B cell (primary cell): ENCODE measurements at regions of chr21 and their contacts with region 1.

Region 1: GRCh38 chr21:33588485-33589335 is at the start of gene DONSON:
- DNase-seq: peak; percentile 92
- ATAC-seq: peak; percentile 95
- H3K4me3 ChIP-seq: peak within 1 kb of the TSS; percentile 63 to 96 (median 95)
- H3K4me3 Mint-ChIP-seq: peak within 1 kb of the TSS; percentile 94
- H3K27ac ChIP-seq: peak within 1 kb of the TSS; percentile 24 to 50
- H3K27ac Mint-ChIP-seq: peak within 1 kb of the TSS; percentile 77
- H3K4me1 ChIP-seq: peaks cover 9 to 13% of the 10 kb centered on the region in 2 donors
- H3K4me1 Mint-ChIP-seq: peaks cover 14% of the 10 kb centered on the region
- H3K27me3 ChIP-seq: no peaks in the 10 kb centered on the region
- H3K27me3 Mint-ChIP-seq: no peaks in the 10 kb centered on the region
- CTCF ChIP-seq: peak; percentile 50
- total RNA-seq, gene DONSON: 6.0 and 6.3 TPM in 2 replicates

Region 2: GRCh38 chr21:33441489-33442477 is 146.9 kb before region 1 on chr21:
- CTCF ChIA-PET with region 1: no interaction called
- POLR2A ChIA-PET with region 1: no interaction called
- intact Hi-C with region 1: no loop called
- DNase-seq: peak; percentile 77
- ATAC-seq: peak; percentile 93
- H3K4me3 ChIP-seq: peak overlapping the region in 1 of 5 experiments; percentile 38
- H3K4me3 Mint-ChIP-seq: peak overlapping the region; percentile 71
- H3K27ac ChIP-seq: peak overlapping the region; percentile 88
- H3K27ac Mint-ChIP-seq: peak overlapping the region; percentile 96
- H3K4me1 ChIP-seq: peaks cover 56 to 65% of the 10 kb centered on the region in 2 donors
- H3K4me1 Mint-ChIP-seq: peaks cover 55% of the 10 kb centered on the region
- H3K27me3 ChIP-seq: no peaks in the 10 kb centered on the region
- H3K27me3 Mint-ChIP-seq: no peaks in the 10 kb centered on the region
- CTCF ChIP-seq: no peak

Region 3: GRCh38 chr21:33491373-33492102 is 97.2 kb before region 1 on chr21 and contains the start of gene DNAJC28:
- CTCF ChIA-PET with region 1: no interaction called
- POLR2A ChIA-PET with region 1: no interaction called
- intact Hi-C with region 1: loop called (anchors 1 kb)
- DNase-seq: peak; percentile 98
- ATAC-seq: peak; percentile 97
- H3K4me3 ChIP-seq: peak within 1 kb of the TSS; percentile 65 to 87 (median 80)
- H3K4me3 Mint-ChIP-seq: peak within 1 kb of the TSS; percentile 87
- H3K27ac ChIP-seq: peak within 1 kb of the TSS; percentile 29 to 62
- H3K27ac Mint-ChIP-seq: peak within 1 kb of the TSS; percentile 87
- H3K4me1 ChIP-seq: peaks cover 0 to 9% of the 10 kb centered on the region in 2 donors
- H3K4me1 Mint-ChIP-seq: peaks cover 10% of the 10 kb centered on the region
- H3K27me3 ChIP-seq: no peaks in the 10 kb centered on the region
- H3K27me3 Mint-ChIP-seq: no peaks in the 10 kb centered on the region
- CTCF ChIP-seq: no peak
- total RNA-seq, gene DNAJC28: 2.4 and 2.5 TPM in 2 replicates

Region 4: DNA sequence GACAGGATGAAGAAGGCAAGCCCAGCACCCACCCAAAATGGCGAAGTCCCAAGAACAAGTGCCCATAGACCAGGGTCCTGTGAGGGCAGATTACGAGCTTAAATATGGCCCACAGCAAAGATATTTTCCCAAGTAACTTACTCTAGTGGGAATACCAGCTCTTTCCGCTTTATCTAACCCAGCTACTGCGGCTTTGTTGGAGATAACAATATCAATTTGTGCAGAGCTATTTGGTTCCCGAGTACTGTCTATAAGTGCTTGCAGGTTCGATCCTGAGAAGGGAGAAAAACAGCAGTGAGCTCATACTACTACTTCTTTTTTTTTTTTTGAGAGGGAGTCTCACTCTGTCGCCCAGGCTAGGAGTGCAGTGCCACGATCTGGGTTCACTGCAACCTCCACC is 82.9 kb before region 1 on chr21:
- CTCF ChIA-PET with region 1: no interaction called
- POLR2A ChIA-PET with region 1: interaction called, 10 read pairs
- intact Hi-C with region 1: no loop called
- DNase-seq: no peak
- ATAC-seq: no peak
- H3K4me3 ChIP-seq: no peak overlapping the region
- H3K4me3 Mint-ChIP-seq: no peak overlapping the region
- H3K27ac ChIP-seq: no peak overlapping the region
- H3K27ac Mint-ChIP-seq: no peak overlapping the region
- H3K4me1 ChIP-seq: no peaks in the 10 kb centered on the region
- H3K4me1 Mint-ChIP-seq: no peaks in the 10 kb centered on the region
- H3K27me3 ChIP-seq: no peaks in the 10 kb centered on the region
- H3K27me3 Mint-ChIP-seq: no peaks in the 10 kb centered on the region
- CTCF ChIP-seq: no peak

Region 5: DNA sequence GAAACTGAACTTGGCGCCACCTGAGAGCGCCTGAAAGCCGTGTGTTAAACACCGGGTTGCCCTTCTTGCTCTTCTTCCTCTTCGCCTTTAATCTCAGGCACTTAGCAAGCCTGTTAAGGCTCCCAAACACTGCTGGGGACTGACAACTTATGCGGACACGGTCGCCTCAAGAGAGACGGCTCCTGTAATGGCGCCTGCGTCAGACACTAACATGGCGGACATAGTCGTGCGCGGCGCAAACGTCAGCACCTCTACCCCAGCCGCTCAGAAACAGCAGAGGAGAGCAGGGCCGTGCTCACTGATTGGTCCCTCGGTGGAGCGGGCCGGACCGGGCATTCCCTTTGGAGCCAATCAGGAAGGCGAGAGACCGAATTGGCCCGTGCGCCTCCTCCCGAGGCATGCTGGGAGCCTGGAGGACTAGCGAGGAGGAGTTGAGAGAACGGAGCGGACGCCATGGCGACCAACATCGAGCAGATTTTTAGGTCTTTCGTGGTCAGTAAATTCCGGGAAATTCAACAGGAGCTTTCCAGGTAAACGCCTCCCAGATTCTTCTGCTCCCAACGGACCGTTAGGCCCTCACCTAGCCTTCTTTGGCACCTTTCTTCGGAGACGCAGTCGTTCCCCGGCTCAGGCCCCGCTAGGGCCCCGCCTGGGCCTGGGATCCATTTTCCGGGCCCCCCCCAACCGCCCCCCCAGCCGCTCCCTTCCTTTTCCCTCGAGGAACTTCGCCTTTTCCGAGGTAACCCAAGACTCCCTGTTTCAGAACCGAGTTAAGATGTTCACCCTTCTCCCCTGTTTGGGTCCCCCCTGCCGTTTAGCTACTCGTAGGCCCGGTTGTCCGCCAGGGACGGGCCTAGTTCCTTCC is 45.8 kb before region 1 on chr21 and contains the start of gene SON:
- CTCF ChIA-PET with region 1: no interaction called
- POLR2A ChIA-PET with region 1: interaction called, 20 read pairs
- intact Hi-C with region 1: loop called (anchors 1 kb)
- DNase-seq: peak; percentile 98
- ATAC-seq: peak; percentile 88
- H3K4me3 ChIP-seq: peak within 1 kb of the TSS; percentile 69 to 99 (median 89)
- H3K4me3 Mint-ChIP-seq: peak within 1 kb of the TSS; percentile 97
- H3K27ac ChIP-seq: peak within 1 kb of the TSS; percentile 96 to 99
- H3K27ac Mint-ChIP-seq: peak within 1 kb of the TSS; percentile 99
- H3K4me1 ChIP-seq: peaks cover 17 to 31% of the 10 kb centered on the region in 2 donors
- H3K4me1 Mint-ChIP-seq: peaks cover 43% of the 10 kb centered on the region
- H3K27me3 ChIP-seq: no peaks in the 10 kb centered on the region
- H3K27me3 Mint-ChIP-seq: no peaks in the 10 kb centered on the region
- CTCF ChIP-seq: no peak
- total RNA-seq, gene SON: 441 and 463 TPM in 2 replicates

Region 6: GRCh38 chr21:33608559-33608958 is 19.8 kb after region 1 on chr21:
- CTCF ChIA-PET with region 1: interaction called, 24 read pairs
- POLR2A ChIA-PET with region 1: interaction called, 3 read pairs
- intact Hi-C with region 1: no loop called
- DNase-seq: no peak
- ATAC-seq: no peak
- H3K4me3 ChIP-seq: no peak overlapping the region
- H3K4me3 Mint-ChIP-seq: no peak overlapping the region
- H3K27ac ChIP-seq: no peak overlapping the region
- H3K27ac Mint-ChIP-seq: no peak overlapping the region
- H3K4me1 ChIP-seq: no peaks in the 10 kb centered on the region
- H3K4me1 Mint-ChIP-seq: no peaks in the 10 kb centered on the region
- H3K27me3 ChIP-seq: no peaks in the 10 kb centered on the region
- H3K27me3 Mint-ChIP-seq: no peaks in the 10 kb centered on the region
- CTCF ChIP-seq: no peak

Region 7: DNA sequence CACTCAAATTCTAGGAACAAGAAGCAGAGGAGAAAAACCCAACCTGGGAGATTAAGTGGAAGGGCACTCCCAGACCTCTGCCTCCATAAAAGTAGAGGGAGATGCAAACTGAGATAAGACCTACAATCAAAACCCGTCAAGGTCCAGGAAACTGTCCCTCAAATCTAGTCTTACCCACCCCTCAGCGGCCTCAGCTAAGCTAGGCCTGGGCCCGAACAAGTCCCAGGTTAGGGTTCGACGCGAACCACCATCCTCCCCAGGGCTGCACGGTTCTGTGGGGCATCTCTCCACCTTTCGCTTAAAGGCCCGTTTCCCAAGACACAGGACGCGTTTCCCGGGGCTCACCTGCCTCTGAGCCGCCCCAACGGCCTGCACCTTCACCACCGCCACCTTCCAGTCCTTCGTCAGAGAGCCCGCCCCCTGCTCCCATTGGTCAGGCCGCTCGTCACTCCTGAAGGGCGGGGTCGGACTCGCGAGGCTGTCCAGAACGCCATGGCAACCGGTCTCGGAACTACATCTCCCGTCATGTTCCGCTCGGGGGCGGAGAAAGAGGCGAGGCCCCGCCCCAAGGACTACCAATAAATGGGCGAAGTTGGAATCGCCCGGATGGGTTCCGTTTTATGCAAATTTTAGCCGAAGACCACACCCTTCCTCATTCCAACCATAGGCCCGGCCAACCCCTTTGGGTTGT is 52.8 kb after region 1 on chr21 and contains the start of gene CRYZL1:
- CTCF ChIA-PET with region 1: no interaction called
- POLR2A ChIA-PET with region 1: no interaction called
- intact Hi-C with region 1: loop called (anchors 1 kb)
- DNase-seq: peak; percentile 100
- ATAC-seq: peak; percentile 77
- H3K4me3 ChIP-seq: peak within 1 kb of the TSS; percentile 71 to 91 (median 79)
- H3K4me3 Mint-ChIP-seq: peak within 1 kb of the TSS; percentile 94
- H3K27ac ChIP-seq: peak within 1 kb of the TSS; percentile 84 to 90
- H3K27ac Mint-ChIP-seq: peak within 1 kb of the TSS; percentile 97
- H3K4me1 ChIP-seq: peaks cover 16 to 20% of the 10 kb centered on the region in 2 donors
- H3K4me1 Mint-ChIP-seq: peaks cover 27% of the 10 kb centered on the region
- H3K27me3 ChIP-seq: peaks cover 0 to 27% (median 19%) of the 10 kb centered on the region in 4 experiments
- H3K27me3 Mint-ChIP-seq: peaks cover 22% of the 10 kb centered on the region
- CTCF ChIP-seq: no peak
- total RNA-seq, gene CRYZL1: 60.6 and 66.9 TPM in 2 replicates

Region 8: DNA sequence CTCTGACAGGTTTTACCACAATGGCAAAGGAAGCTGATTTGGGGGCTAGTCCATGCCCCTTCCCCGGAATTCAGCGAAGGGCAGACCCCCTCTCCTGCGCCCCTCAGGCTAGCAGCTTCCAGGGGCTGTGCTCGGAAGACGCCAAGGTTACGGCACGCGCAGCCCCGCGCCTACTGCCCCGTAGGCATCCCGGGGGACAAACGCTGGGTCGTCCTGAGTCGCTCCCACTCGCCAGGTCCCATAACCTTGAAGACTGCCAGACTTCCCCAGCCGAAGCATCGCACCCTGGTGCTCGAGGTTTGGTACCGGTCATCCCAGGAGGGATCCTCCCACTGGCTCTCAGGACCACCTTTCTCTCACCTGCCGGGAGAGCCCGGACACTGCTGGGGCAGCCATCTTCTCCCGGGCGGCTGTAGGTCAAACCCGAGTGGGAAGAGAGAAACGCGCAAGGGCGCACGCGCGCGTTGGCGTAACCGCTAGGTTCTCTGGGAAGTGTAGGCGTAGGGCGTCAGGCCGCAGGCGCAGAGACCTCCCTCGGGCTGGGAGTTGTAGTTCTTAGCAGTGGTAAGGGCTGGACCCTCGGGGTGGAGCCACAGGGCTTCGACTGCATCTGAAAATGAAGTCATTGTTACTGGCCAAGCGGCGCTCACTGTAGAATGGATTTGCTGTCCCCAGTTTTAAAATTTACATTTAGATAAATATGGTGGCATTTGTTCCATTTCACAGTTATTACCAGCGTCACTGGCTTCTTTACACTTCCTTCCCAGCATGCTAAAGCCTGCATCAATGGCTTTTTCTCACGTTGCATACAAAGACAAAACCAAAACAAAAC is 326.9 kb after region 1 on chr21 and contains the start of gene ATP5PO:
- CTCF ChIA-PET with region 1: no interaction called
- POLR2A ChIA-PET with region 1: no interaction called
- intact Hi-C with region 1: loop called (anchors 5 kb)
- DNase-seq: peak; percentile 97
- ATAC-seq: peak; percentile 100
- H3K4me3 ChIP-seq: peak within 1 kb of the TSS; percentile 62 to 99 (median 85)
- H3K4me3 Mint-ChIP-seq: peak within 1 kb of the TSS; percentile 98
- H3K27ac ChIP-seq: peak within 1 kb of the TSS; percentile 49 to 86
- H3K27ac Mint-ChIP-seq: peak within 1 kb of the TSS; percentile 94
- H3K4me1 ChIP-seq: peaks cover 14 to 16% of the 10 kb centered on the region in 2 donors
- H3K4me1 Mint-ChIP-seq: peaks cover 27% of the 10 kb centered on the region
- H3K27me3 ChIP-seq: no peaks in the 10 kb centered on the region
- H3K27me3 Mint-ChIP-seq: no peaks in the 10 kb centered on the region
- CTCF ChIP-seq: no peak
- total RNA-seq, gene ATP5PO: 123 and 124 TPM in 2 replicates